Naive thymus-derived CD4-positive, alpha-beta T cell (primary cell): ENCODE measurements at regions of chr6 and their contacts with region 1.

Region 1: DNA sequence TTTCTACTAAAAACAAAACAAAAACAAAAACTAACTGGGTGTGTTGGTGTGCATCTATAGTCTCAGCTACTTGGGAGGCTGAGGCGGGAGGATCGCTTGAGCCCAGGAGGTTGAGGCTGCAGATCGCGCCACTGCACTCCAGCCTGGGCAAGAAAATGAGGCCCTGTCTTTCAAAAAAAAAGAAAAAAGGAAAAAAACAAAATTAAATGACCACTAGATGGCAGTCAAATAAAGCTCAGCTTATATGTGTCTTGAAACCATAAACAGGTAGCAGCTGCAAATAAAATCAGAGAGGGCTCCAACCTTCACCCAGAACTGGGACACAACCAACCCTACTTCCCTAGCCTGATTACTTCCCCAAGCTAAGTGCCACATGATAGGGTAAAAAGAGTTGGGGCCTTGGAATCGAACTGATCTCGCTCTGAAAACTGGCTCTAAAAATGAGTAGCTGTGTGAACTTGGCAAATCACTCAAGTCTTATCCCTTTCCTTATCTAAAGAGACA is 67.1 kb upstream of the ADGRF4 start:
- DNase-seq: peak in 6 of 9 donors; percentile 20 to 60 (median 53)
- ATAC-seq: peak; percentile 64
- H3K4me3 ChIP-seq: no peak overlapping the region
- H3K4me3 Mint-ChIP-seq: no peak overlapping the region
- H3K27ac ChIP-seq: no peak overlapping the region
- H3K27ac Mint-ChIP-seq: peak overlapping the region in 8 of 9 donors; percentile 10 to 75 (median 48)
- H3K4me1 ChIP-seq: peaks cover 6 to 9% of the 10 kb centered on the region in 2 donors
- H3K4me1 Mint-ChIP-seq: peaks cover 7 to 28% (median 20%) of the 10 kb centered on the region in 7 donors
- H3K27me3 ChIP-seq: no peaks in the 10 kb centered on the region
- H3K27me3 Mint-ChIP-seq: no peaks in the 10 kb centered on the region

Region 2: GRCh38 chr6:47780510-47781356 is 149.4 kb after region 1 on chr6:
- CTCF ChIA-PET with region 1: interaction called, 8 read pairs
- POLR2A ChIA-PET with region 1: no interaction called
- intact Hi-C with region 1: loop called (anchors 1 kb)
- DNase-seq: peak in 7 of 9 donors; percentile 18 to 57 (median 41)
- ATAC-seq: peak; percentile 83
- H3K4me3 ChIP-seq: no peak overlapping the region
- H3K4me3 Mint-ChIP-seq: peak overlapping the region in 4 of 10 donors; percentile 6 to 47 (median 23)
- H3K27ac ChIP-seq: no peak overlapping the region
- H3K27ac Mint-ChIP-seq: peak overlapping the region in 2 of 9 donors; percentile 10 to 25
- H3K4me1 ChIP-seq: peaks cover 0 to 5% of the 10 kb centered on the region in 2 donors
- H3K4me1 Mint-ChIP-seq: peaks cover 0 to 11% (median 8%) of the 10 kb centered on the region in 7 donors
- H3K27me3 ChIP-seq: no peaks in the 10 kb centered on the region
- H3K27me3 Mint-ChIP-seq: peaks cover 0 to 44% (median 5%) of the 10 kb centered on the region in 5 donors